WTC11 (cell line): ENCODE measurements at regions of chr11 and their contacts with region 1.

Region 1: GRCh38 chr11:22304337-22304961 is 33.7 kb upstream of the SLC17A6 start:
- DNase-seq: no peak
- ATAC-seq: peak; percentile 53
- H3K4me3 Mint-ChIP-seq: no peak overlapping the region
- H3K27ac Mint-ChIP-seq: no peak overlapping the region
- H3K4me1 Mint-ChIP-seq: no peaks in the 10 kb centered on the region
- H3K27me3 Mint-ChIP-seq: no peaks in the 10 kb centered on the region
- CTCF ChIP-seq: peak; percentile 66

Region 2: GRCh38 chr11:22169833-22170232 is 134.6 kb before region 1 on chr11:
- CTCF ChIA-PET with region 1: interaction called, 12 read pairs
- POLR2A ChIA-PET with region 1: no interaction called
- DNase-seq: no peak
- ATAC-seq: no peak
- H3K4me3 Mint-ChIP-seq: no peak overlapping the region
- H3K27ac Mint-ChIP-seq: no peak overlapping the region
- H3K4me1 Mint-ChIP-seq: 0 out of 2 replicates have a peak, but pooled peaks cover 3% of the 10 kb centered on the region
- H3K27me3 Mint-ChIP-seq: no peaks in the 10 kb centered on the region
- CTCF ChIP-seq: no peak

Region 3: DNA sequence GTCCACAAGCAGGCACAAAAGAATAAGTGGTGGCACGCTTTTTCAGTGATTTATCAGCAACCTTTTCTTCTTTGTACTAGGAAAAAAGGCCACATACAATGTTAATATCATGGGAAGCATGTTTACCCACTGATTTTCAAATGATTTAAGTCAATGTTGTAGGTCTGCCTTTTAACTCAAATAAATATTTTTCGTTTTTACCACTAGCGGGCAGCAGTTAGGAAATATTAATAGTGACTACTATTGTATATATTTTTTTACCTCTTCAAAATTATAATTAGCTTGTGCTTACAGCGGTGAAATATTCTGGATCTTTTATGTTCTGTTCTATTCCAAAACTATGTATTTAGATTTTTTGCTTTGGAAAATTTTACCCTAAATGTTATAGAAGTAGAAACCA is 27.3 kb after region 1 on chr11:
- CTCF ChIA-PET with region 1: no interaction called
- POLR2A ChIA-PET with region 1: no interaction called
- DNase-seq: no peak
- ATAC-seq: no peak
- H3K4me3 Mint-ChIP-seq: no peak overlapping the region
- H3K27ac Mint-ChIP-seq: no peak overlapping the region
- H3K4me1 Mint-ChIP-seq: peaks cover 29% of the 10 kb centered on the region
- H3K27me3 Mint-ChIP-seq: no peaks in the 10 kb centered on the region
- CTCF ChIP-seq: no peak